ENCODE measurements at regions of chr12 and their contacts with region 1.

Region 1: DNA sequence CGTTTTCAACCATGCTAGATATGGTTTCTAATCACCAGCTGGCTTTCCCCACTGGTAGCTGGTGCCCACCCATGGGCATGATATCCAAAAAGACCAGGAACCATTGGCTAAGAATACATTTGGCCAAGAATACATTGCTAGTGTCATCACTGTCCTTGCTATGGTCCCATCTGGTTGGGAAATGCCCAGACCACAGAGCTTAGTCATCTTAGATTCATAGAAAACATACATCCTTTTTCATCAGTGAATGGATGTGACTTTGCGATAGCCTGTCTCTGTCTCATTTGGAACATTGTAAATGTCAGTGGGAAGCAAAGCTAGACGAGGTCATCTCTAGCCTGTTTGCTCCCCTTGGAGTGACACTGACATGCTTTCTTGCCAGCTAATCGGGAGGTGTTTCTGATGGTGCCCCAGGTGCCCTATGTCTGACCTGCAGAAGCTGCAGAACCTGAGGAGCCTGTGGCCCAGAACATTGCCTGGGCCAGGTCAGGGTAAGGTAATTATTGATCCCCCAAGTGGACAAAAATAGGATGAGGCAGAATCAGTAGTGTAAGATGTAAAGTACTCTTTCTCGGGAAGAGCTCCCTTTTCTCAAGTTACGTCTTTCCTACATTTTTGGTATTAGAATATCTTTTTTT is 194.8 kb downstream of the SLC41A2 start:
- DNase-seq: peak in 1 of 2 experiments; percentile 14
- H3K4me3 ChIP-seq: no peak overlapping the region
- H3K27ac ChIP-seq: no peak overlapping the region
- H3K4me1 ChIP-seq: peaks cover 0 to 3% (median 2%) of the 10 kb centered on the region in 4 experiments; a peak in 1 of 7 replicates
- H3K27me3 ChIP-seq: no peaks in the 10 kb centered on the region
- CTCF ChIP-seq: no peak
- EP300 ChIP-seq: no peak
- POLR2A ChIP-seq: no peak
- RAD21 ChIP-seq: no peak

Region 2: GRCh38 chr12:104695453-104696148 is 67.7 kb before region 1 on chr12:
- CTCF ChIA-PET with region 1: no interaction called
- POLR2A ChIA-PET with region 1: no interaction called
- DNase-seq: no peak
- H3K4me3 ChIP-seq: no peak overlapping the region; a peak in 1 of 8 replicates
- H3K27ac ChIP-seq: no peak overlapping the region
- H3K4me1 ChIP-seq: peaks cover 0 to 6% (median 2%) of the 10 kb centered on the region in 4 experiments; a peak in 2 of 7 replicates
- H3K27me3 ChIP-seq: no peaks in the 10 kb centered on the region
- CTCF ChIP-seq: no peak
- EP300 ChIP-seq: no peak
- POLR2A ChIP-seq: no peak
- RAD21 ChIP-seq: no peak

Region 3: GRCh38 chr12:104750061-104750460 is 13.2 kb before region 1 on chr12:
- CTCF ChIA-PET with region 1: interaction called, 17 read pairs
- POLR2A ChIA-PET with region 1: no interaction called
- DNase-seq: no peak
- H3K4me3 ChIP-seq: no peak overlapping the region
- H3K27ac ChIP-seq: no peak overlapping the region
- H3K4me1 ChIP-seq: peaks cover 2 to 12% (median 5%) of the 10 kb centered on the region in 4 experiments; a peak in 2 of 7 replicates
- H3K27me3 ChIP-seq: no peaks in the 10 kb centered on the region
- CTCF ChIP-seq: no peak
- EP300 ChIP-seq: no peak
- POLR2A ChIP-seq: no peak
- RAD21 ChIP-seq: no peak